Activated CD4-positive, alpha-beta memory T cell treated with anti-CD3 and anti-CD28 coated beads for 36 hours (primary cell): ENCODE measurements at regions of chr7 and their contacts with region 1.

Region 1: DNA sequence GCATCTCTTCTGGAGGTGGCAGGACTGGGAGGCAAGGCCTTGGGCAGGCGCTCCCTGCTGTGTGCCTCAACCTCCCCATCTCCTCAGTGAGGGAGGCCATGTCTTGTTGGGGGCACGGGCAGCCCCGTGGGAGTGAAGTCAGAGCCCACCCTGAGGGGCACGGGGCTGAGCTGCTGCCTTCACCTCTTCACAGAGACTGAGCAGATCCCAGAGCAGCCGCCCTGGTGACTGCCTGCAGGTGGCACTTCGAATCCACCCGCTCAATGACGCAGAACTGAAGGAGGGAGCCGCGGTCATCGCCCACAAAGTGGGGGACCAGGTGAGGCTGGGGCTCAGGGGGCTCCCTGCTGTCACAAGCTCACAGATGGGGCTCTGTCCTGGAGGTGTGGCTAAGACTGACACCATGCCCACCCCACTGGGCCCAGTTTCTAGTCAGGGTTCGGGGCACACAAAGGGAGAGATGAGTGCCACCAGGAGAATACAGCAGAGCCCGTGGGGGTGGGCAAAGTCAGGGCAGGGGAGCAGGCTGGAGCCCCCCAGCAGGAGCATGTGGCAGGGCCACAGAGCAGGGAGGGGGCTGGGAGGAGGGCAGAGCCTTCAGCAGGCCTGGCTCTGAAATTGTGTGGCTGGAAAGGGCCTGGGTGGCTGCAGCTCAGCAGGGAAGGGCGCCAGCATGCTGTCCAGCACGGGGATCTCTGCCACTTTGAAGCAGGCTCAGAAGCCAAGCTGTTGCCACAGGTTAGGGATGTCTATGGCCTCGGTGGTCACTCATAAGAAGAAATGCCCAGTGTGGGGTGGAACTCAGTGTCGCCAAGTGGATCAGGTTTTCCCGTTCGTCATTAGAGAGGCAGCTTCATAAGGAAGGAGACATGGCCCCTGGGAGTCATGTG is 18.8 kb upstream of the CHST12 start:
- DNase-seq: peak; percentile 19
- H3K4me3 Mint-ChIP-seq: no peak overlapping the region
- H3K27ac Mint-ChIP-seq: no peak overlapping the region
- H3K4me1 Mint-ChIP-seq: no peaks in the 10 kb centered on the region
- H3K27me3 Mint-ChIP-seq: no peaks in the 10 kb centered on the region

Region 2: DNA sequence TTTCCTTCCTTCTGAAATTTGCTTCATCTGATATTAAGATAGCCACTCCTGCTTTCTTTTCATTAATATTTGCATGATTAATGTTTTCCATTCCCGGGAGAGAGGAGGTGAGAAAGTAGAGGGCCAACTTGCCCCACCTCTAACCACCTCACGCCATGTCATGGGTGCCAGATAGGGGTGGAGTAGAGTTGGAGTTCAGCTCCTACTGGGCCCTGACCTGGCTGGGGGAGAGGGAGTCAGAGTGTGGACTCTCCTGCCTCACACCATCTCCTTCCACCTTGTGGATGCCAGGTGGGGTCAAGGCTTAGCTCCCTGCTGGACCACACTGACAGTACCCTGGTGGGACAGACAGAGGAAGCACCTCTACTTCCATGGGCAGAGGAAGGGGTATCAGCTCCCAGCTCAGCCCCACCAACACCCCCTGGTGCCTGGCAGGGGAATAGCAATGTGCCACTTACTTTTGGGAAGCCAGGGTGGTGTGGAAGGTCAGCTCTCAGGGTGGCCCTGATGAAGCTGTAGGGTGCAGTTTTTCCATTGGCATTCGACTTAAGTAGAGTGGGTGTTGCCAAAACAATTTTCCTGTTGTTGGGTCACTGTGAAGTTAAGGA is 46.8 kb after region 1 on chr7:
- CTCF ChIA-PET with region 1: interaction called, 13 read pairs
- POLR2A ChIA-PET with region 1: no interaction called
- intact Hi-C with region 1: loop called (anchors 2 kb)
- DNase-seq: peak; percentile 67
- H3K4me3 Mint-ChIP-seq: no peak overlapping the region
- H3K27ac Mint-ChIP-seq: no peak overlapping the region
- H3K4me1 Mint-ChIP-seq: peaks cover 5% of the 10 kb centered on the region
- H3K27me3 Mint-ChIP-seq: no peaks in the 10 kb centered on the region

Region 3: GRCh38 chr7:2555121-2556052 is 170.8 kb after region 1 on chr7 and contains the start of gene BRAT1:
- CTCF ChIA-PET with region 1: no interaction called
- POLR2A ChIA-PET with region 1: no interaction called
- intact Hi-C with region 1: no loop called
- DNase-seq: peak; percentile 97
- H3K4me3 Mint-ChIP-seq: peak within 1 kb of the TSS; percentile 89
- H3K27ac Mint-ChIP-seq: peak within 1 kb of the TSS; percentile 91
- H3K4me1 Mint-ChIP-seq: peaks cover 40% of the 10 kb centered on the region
- H3K27me3 Mint-ChIP-seq: no peaks in the 10 kb centered on the region
- total RNA-seq, gene BRAT1: 33.5 to 33.6 TPM